Activated CD8-positive, alpha-beta memory T cell treated with anti-CD3 and anti-CD28 coated beads, Interleukin-2, amount 10 ng/mL, durations not matched to agents 7 days and 5 days (primary cell): ENCODE measurements at regions of chr21 and their contacts with region 1.

Region 1: DNA sequence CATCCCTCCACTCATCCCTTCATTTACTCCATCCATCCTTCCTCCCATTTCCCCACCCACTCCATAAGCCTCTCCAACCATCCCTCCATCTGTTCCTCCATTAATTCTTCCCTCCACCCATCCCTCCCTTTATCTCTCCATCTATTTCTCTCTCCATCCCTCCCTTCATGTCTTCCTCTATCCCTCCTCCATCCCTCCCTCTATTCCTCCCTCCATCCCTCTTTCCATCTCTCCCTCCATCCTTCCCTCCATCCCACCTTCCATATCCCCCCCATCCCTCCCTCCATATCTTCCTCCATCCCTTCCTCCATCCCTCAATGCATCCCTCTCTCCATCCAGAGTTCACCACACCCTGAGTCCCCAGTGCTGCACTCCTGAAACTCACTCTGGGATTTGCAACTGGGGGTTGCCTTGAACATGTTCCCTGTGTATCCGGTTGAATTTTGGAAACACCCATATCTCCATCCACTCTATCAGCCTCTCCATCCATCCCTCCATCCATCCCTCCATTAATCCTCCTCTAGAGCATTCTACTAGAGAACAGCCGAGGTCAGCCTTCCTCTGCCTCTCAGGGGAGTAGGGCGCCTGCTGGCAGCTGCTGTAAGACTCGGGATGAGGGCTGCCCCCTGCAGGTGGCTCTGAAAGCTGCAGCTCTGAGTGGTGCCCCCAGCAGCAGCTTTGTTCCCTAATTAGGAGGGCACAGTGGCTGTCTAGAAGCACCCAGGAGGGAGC is 39.4 kb downstream of the ABCG1 start:
- DNase-seq: peak; percentile 87
- ATAC-seq: peak; percentile 96
- H3K4me3 Mint-ChIP-seq: no peak overlapping the region
- H3K27ac Mint-ChIP-seq: no peak overlapping the region
- H3K4me1 Mint-ChIP-seq: peaks cover 3% of the 10 kb centered on the region
- H3K27me3 Mint-ChIP-seq: peaks cover 2% of the 10 kb centered on the region

Region 2: DNA sequence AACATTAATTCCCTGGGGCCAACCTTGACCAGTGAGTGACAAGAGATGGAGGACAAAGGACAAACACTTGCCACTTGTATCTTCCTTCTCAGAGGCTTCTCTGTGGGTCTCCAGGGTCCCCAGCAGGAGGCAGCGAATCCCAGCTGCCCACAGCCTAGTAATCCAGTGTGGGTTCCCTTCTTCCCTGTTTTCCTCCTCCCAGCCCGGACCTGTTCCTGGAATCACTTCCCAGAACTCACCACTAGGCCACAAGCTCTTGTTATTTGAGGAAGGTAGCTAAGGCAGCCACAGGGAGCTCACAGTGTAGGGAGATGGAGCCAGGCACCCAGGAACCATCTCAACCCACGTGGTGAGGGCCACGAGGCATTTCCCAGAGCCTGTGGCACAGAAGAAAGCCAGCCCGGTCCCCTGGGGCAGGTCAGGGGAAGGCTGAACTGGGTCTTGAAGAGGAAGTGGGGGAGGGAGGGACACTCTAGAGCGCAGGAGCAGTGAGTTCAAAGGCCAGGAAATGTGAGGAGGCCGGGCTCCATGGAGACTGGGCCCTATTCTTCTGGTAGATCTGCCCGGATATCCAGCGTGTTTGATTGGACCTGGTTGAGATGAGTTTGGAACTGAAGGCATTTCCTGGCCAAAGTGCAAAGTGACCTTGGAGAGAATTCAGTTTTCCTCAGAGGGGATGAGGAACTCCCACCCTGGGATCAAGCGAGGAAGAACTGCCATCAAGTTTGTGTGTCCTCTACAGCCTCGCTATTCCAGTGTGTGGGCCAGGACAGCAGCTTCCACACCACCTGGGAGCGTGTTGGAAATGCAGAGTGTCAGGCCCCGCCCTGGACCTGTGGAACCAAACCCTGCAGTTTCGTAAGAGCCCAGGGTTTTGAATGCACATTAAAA is 284.2 kb before region 1 on chr21:
- CTCF ChIA-PET with region 1: no interaction called
- DNase-seq: peak; percentile 35
- ATAC-seq: no peak
- H3K4me3 Mint-ChIP-seq: no peak overlapping the region
- H3K27ac Mint-ChIP-seq: no peak overlapping the region
- H3K4me1 Mint-ChIP-seq: peaks cover 2% of the 10 kb centered on the region
- H3K27me3 Mint-ChIP-seq: peaks cover 1% of the 10 kb centered on the region

Region 3: GRCh38 chr21:42187976-42188653 is 70.2 kb before region 1 on chr21:
- CTCF ChIA-PET with region 1: interaction called, 18 read pairs
- DNase-seq: peak; percentile 95
- ATAC-seq: peak; percentile 93
- H3K4me3 Mint-ChIP-seq: peak overlapping the region; percentile 56
- H3K27ac Mint-ChIP-seq: peak overlapping the region; percentile 95
- H3K4me1 Mint-ChIP-seq: peaks cover 71% of the 10 kb centered on the region
- H3K27me3 Mint-ChIP-seq: peaks cover 18% of the 10 kb centered on the region

Region 4: DNA sequence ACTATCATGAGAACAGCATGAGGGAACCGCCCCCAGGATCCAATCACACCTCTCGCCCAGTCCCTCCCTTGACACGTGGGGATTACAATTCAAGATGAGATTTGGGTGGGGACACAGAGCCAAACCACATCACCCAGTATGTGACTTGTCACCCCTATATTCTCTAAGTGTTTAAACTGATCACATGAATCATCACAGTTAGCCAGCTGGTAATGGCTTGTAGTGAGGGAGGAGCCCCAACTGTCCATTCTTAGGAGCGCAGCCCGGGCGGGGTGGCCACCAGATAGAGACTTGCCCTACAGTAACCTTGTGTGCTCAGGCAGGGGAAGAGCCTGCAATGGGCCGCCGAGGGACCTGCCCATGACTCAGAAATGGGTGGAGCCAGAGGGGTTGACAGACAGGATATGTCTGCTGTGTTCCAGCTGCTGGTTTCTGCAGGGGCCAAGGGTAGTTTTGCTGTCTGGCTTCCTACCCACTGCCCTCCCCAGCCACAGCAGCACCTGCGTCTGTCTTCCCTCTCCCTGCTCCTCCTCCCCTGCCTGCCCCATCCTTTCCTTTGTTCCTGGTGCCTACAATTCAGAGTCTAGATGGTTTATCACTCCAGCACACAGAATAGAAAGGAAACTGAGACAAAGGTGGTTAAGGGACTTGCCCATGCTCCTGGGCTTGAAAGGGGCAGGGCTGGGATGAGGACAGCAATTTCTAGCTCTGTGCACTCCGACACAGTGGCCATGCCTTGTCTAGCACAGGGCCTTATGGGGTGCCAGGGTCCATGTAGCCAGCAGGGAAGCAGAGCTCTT is 30.2 kb before region 1 on chr21:
- CTCF ChIA-PET with region 1: interaction called, 24 read pairs
- DNase-seq: peak; percentile 97
- ATAC-seq: peak; percentile 99
- H3K4me3 Mint-ChIP-seq: peak overlapping the region; percentile 42
- H3K27ac Mint-ChIP-seq: peak overlapping the region; percentile 81
- H3K4me1 Mint-ChIP-seq: peaks cover 59% of the 10 kb centered on the region
- H3K27me3 Mint-ChIP-seq: no peaks in the 10 kb centered on the region

Region 5: DNA sequence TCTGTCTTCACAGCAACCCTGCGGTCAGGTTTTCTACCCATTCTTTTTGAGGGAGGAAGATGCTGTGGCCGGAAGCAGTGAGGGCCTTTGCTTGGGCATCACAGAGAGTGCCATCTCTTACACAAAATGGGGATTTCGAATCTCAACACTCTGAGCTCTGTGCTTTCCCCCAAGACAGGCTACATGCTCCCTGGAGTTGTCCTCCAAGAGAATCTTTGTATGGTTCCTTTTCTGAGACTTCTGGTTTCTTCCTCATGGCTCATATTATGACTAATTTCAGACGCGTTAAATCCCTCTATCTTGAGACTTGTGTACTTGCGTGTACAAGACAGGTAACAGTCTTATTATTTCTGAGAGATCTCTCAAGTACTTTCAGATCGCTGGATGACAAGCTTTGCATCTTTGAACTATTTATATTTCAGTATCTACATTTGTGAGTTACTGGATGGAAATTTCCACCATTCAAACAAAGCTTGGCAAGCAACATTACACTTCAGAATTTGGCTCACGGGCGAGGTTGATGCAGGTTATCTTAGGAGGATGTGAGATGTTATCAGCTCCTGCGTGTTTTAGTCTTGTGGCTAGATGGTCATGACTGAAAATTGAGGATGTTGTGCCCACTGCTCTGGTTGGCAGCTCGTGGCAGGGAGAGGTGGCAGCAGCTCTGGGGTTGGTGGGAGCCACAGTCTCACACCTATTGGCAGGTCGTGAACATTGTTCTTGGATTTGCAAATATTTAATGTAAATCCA is 20.0 kb before region 1 on chr21:
- CTCF ChIA-PET with region 1: interaction called, 64 read pairs
- DNase-seq: peak; percentile 74
- ATAC-seq: peak; percentile 22
- H3K4me3 Mint-ChIP-seq: peak overlapping the region; percentile 47
- H3K27ac Mint-ChIP-seq: peak overlapping the region; percentile 86
- H3K4me1 Mint-ChIP-seq: peaks cover 59% of the 10 kb centered on the region
- H3K27me3 Mint-ChIP-seq: no peaks in the 10 kb centered on the region

Region 6: DNA sequence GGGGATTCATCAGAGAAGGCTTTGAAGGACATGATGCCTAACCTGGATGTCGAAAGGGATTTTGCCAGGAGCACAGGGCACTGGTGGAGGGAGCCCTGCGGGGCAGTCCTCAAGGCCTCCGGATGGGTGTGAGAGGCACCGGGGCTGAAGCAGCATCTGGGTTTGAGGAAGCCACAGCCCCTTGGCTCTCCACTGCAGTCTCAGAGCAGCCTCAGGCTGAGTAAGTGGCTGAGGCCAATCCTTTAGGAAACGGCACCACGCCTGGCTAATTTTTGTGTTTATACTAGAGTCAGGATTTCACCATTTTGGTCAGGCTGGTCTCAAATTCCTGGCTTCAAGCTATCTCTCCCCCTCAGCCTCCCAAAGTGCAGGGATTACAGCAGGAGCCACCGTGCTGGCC is 655.2 kb after region 1 on chr21:
- CTCF ChIA-PET with region 1: no interaction called
- DNase-seq: no peak
- ATAC-seq: no peak
- H3K4me3 Mint-ChIP-seq: no peak overlapping the region
- H3K27ac Mint-ChIP-seq: no peak overlapping the region
- H3K4me1 Mint-ChIP-seq: peaks cover 3% of the 10 kb centered on the region
- H3K27me3 Mint-ChIP-seq: no peaks in the 10 kb centered on the region